Activated B cell treated with CpG ODN at 0.5 μM for 24 hours (primary cell): ENCODE measurements at regions of chr6 and their contacts with region 1.

Region 1: DNA sequence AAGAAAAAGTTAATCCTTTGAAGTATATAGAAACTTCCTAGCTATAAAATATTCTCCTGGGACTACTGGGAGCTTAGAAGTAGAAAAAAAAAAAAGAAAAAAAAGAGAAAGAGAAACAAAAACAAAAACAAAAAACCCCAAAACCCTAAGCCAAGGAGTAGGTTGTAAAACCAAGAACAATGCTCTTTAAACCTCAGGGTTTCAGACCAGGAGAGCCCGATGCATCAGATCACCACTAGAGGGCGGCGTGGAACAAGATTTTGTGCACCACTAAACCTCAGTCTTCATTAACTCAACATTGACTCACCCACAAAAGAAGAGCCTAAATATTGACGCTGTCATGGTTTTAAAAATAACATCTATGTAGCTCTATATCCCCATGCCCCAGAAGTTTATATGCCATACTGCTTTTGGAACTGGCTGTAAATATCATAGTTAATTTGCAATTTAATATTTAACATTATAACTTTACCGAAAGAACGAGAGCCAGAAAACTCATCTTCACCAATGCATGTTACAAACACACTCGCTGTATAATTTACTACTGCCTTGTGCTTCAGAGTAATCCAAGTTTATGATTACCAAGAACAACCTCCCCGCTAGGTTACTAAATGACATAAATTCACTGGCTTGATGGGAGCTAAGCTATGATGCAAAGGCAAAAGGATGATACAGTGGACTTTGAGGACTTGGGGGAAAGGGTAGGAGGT is 19.2 kb downstream of the MCUR1 start:
- DNase-seq: peak; percentile 57
- ATAC-seq: peak; percentile 98
- H3K4me3 Mint-ChIP-seq: no peak overlapping the region
- H3K27ac Mint-ChIP-seq: no peak overlapping the region
- H3K4me1 Mint-ChIP-seq: peaks cover 7% of the 10 kb centered on the region
- H3K27me3 Mint-ChIP-seq: no peaks in the 10 kb centered on the region
- CTCF ChIP-seq: peak; percentile 68

Region 2: GRCh38 chr6:13814176-13814937 is 19.2 kb after region 1 on chr6 and contains the start of gene MCUR1:
- CTCF ChIA-PET with region 1: interaction called, 8 read pairs
- POLR2A ChIA-PET with region 1: interaction called, 3 read pairs
- intact Hi-C with region 1: loop called (anchors 1 kb)
- DNase-seq: peak; percentile 81
- ATAC-seq: peak; percentile 83
- H3K4me3 Mint-ChIP-seq: peak within 1 kb of the TSS; percentile 91
- H3K27ac Mint-ChIP-seq: peak within 1 kb of the TSS; percentile 87
- H3K4me1 Mint-ChIP-seq: peaks cover 32% of the 10 kb centered on the region
- H3K27me3 Mint-ChIP-seq: no peaks in the 10 kb centered on the region
- CTCF ChIP-seq: no peak
- total RNA-seq, gene MCUR1: 13.6 and 14.1 TPM in 2 replicates

Region 3: GRCh38 chr6:14046476-14047068 is 251.4 kb after region 1 on chr6:
- CTCF ChIA-PET with region 1: interaction called, 5 read pairs
- POLR2A ChIA-PET with region 1: no interaction called
- intact Hi-C with region 1: loop called (anchors 1 kb)
- DNase-seq: no peak
- ATAC-seq: peak; percentile 89
- H3K4me3 Mint-ChIP-seq: no peak overlapping the region
- H3K27ac Mint-ChIP-seq: no peak overlapping the region
- H3K4me1 Mint-ChIP-seq: peaks cover 5% of the 10 kb centered on the region
- H3K27me3 Mint-ChIP-seq: peaks cover 3% of the 10 kb centered on the region
- CTCF ChIP-seq: peak; percentile 20

Region 4: GRCh38 chr6:15464211-15464725 is 1669.1 kb after region 1 on chr6:
- CTCF ChIA-PET with region 1: no interaction called
- POLR2A ChIA-PET with region 1: no interaction called
- intact Hi-C with region 1: loop called (anchors 1 kb)
- DNase-seq: peak; percentile 24
- ATAC-seq: peak; percentile 72
- H3K4me3 Mint-ChIP-seq: no peak overlapping the region
- H3K27ac Mint-ChIP-seq: no peak overlapping the region
- H3K4me1 Mint-ChIP-seq: peaks cover 40% of the 10 kb centered on the region
- H3K27me3 Mint-ChIP-seq: no peaks in the 10 kb centered on the region
- CTCF ChIP-seq: peak; percentile 53

Region 5: DNA sequence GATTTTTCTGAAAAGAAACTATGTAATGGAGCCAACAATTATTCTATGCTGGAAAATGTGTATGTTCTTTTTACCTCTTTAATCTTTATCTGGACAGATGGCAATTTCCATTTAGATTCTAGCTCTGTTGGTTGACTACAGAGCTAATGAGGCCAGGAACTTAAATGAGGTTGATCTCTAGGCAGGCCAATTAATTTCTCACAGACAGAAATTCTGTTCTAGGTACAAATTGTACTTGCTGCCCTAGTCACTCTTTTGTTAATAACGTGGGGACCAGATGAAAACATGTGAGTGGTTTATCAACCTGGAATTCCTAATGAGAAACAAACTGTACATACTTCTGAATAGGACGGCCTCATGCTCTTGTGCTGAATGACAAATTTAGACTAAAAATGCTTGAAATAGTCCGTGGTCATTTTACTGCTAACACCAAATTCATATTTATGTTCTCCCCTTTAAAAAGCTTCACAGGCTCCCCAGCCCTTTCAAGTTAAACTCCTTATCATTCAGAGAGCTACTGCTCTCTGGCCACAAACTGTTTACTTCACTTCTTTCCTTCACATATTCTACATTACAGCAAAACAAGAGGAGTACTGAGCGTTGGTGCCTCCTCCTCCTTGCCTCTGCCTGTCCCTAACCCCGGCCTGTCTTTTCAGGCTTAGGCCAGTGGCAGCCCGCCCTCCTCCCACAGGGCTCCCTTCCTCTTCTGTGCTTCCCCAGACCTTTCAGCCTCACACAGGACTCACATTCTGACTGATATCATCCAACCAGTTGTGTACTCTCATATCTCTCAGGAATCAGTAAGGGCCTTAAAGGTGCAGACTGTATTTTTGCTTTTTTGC is 1826.2 kb after region 1 on chr6:
- CTCF ChIA-PET with region 1: interaction called, 3 read pairs
- POLR2A ChIA-PET with region 1: no interaction called
- intact Hi-C with region 1: loop called (anchors 5 kb)
- DNase-seq: no peak
- ATAC-seq: peak; percentile 79
- H3K4me3 Mint-ChIP-seq: no peak overlapping the region
- H3K27ac Mint-ChIP-seq: peak overlapping the region; percentile 38
- H3K4me1 Mint-ChIP-seq: peaks cover 34% of the 10 kb centered on the region
- H3K27me3 Mint-ChIP-seq: no peaks in the 10 kb centered on the region
- CTCF ChIP-seq: no peak